ENCODE measurements at regions of chr4 and their contacts with region 1.

Region 1: GRCh38 chr4:77075869-77076799 is at the start of gene CCNI:
- DNase-seq: peak; percentile 90 to 96 (median 95)
- ATAC-seq: peak; percentile 88
- H3K4me3 ChIP-seq: peak within 1 kb of the TSS; percentile 86
- H3K4me3 Mint-ChIP-seq: peak within 1 kb of the TSS in 4 of 10 donors; percentile 98 to 99 (median 99)
- H3K27ac ChIP-seq: peak within 1 kb of the TSS; percentile 98
- H3K27ac Mint-ChIP-seq: peak within 1 kb of the TSS in 5 of 9 donors; percentile 100
- H3K4me1 ChIP-seq: peaks cover 14 to 28% of the 10 kb centered on the region in 2 donors
- H3K4me1 Mint-ChIP-seq: peaks cover 28 to 54% (median 43%) of the 10 kb centered on the region in 7 donors
- H3K27me3 ChIP-seq: no peaks in the 10 kb centered on the region
- H3K27me3 Mint-ChIP-seq: peaks cover 0 to 7% (median 0%) of the 10 kb centered on the region in 5 donors
- total RNA-seq, gene CCNI: 206 to 393 (median 314) TPM

Region 2: DNA sequence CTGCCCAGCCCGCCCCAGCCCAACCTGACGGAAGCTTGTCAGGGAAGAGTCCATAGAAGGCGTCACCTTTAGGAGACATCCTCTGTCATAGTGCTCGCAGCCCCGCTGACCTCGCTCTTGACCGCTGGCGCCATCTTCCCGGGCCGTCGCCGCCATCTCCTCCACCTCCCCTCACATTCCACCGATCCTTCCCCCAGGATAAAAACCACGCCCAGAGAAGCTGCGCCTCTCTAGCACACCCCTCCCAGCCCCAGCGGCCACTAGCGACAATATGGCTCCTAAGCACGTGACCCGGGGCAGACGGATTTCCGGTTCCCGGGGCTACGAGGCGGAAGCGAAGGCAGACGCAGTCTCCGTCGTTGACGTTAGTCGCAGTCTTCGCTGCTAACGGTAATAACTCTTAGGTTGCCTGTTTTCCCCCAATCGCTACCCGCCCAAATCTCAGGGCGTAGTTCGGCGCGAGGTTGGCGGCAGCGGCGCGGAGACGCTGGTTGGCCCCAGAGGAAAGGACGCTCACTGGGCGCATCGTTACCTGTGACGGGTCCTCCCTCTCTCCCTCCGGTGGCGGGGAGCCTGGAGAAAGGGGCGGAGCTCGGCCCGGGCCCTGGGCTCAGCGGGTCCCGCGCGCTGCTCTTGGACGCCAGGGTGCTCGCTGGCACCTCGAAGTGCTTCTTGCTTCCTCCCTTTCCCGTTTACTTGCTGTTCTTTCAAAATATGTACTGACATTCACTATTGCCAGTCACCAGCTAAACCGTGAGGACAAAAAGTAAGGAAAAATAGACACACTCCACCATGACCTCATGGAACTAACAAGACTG is 1561.8 kb before region 1 on chr4 and contains the starts of genes RCHY1 and THAP6:
- CTCF ChIA-PET with region 1: no interaction called
- POLR2A ChIA-PET with region 1: no interaction called
- intact Hi-C with region 1: loop called (anchors 5 kb)
- DNase-seq: peak; percentile 82 to 95 (median 93)
- ATAC-seq: peak; percentile 92
- H3K4me3 ChIP-seq: peak within 1 kb of the TSS; percentile 79
- H3K4me3 Mint-ChIP-seq: peak within 1 kb of the TSS in 1 of 10 donors; percentile 97
- H3K27ac ChIP-seq: peak within 1 kb of the TSS; percentile 98
- H3K27ac Mint-ChIP-seq: peak within 1 kb of the TSS in 7 of 9 donors; percentile 96 to 100 (median 98)
- H3K4me1 ChIP-seq: peaks cover 53 to 56% of the 10 kb centered on the region in 2 donors
- H3K4me1 Mint-ChIP-seq: peaks cover 30 to 63% (median 49%) of the 10 kb centered on the region in 7 donors
- H3K27me3 ChIP-seq: no peaks in the 10 kb centered on the region
- H3K27me3 Mint-ChIP-seq: no peaks in the 10 kb centered on the region
- total RNA-seq, gene RCHY1: 23.0 to 37.8 (median 29.6) TPM
- total RNA-seq, gene THAP6: 18.2 to 43.9 (median 25.1) TPM

Region 3: DNA sequence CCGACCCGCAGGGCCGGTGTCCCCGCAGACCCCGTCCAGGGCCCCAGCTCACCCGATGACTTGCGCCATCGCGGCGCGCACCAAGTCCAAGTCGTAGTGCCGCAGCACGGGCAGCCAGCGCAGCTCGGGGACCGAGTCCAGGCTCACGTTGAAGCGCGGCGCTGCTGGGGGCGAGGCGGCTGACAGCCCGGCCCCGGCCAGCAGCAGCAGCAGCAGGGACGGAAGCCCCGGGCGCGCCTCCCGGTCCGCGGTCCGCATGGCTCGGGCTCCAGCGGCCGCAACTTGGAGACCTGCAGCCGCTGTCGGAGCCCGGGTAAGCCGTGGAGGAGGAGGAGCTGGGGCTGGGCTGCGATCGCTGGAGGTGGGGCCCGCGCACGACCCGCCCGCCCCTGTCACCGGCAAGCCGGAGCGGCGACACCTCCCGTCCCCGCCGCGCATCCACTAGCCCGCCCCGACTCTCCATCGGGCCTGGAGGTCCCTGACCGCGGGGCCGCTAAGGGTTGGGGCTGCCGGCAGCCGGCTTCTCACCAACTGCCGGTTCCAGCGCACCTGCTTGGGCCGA is 1135.4 kb before region 1 on chr4 and contains the start of gene NAAA:
- CTCF ChIA-PET with region 1: no interaction called
- POLR2A ChIA-PET with region 1: interaction called, 3 read pairs
- intact Hi-C with region 1: loop called in 1 of 2 experiments (anchors 1 kb)
- DNase-seq: peak; percentile 57 to 87 (median 75)
- ATAC-seq: peak; percentile 92
- H3K4me3 ChIP-seq: peak within 1 kb of the TSS; percentile 100
- H3K4me3 Mint-ChIP-seq: peak within 1 kb of the TSS; percentile 96 to 99 (median 98)
- H3K27ac ChIP-seq: peak within 1 kb of the TSS; percentile 80
- H3K27ac Mint-ChIP-seq: peak within 1 kb of the TSS; percentile 90 to 98 (median 94)
- H3K4me1 ChIP-seq: peaks cover 9 to 12% of the 10 kb centered on the region in 2 donors
- H3K4me1 Mint-ChIP-seq: peaks cover 12 to 34% (median 22%) of the 10 kb centered on the region in 7 donors
- H3K27me3 ChIP-seq: no peaks in the 10 kb centered on the region
- H3K27me3 Mint-ChIP-seq: no peaks in the 10 kb centered on the region
- total RNA-seq, gene NAAA: 36.9 to 103 (median 80.3) TPM

Region 4: DNA sequence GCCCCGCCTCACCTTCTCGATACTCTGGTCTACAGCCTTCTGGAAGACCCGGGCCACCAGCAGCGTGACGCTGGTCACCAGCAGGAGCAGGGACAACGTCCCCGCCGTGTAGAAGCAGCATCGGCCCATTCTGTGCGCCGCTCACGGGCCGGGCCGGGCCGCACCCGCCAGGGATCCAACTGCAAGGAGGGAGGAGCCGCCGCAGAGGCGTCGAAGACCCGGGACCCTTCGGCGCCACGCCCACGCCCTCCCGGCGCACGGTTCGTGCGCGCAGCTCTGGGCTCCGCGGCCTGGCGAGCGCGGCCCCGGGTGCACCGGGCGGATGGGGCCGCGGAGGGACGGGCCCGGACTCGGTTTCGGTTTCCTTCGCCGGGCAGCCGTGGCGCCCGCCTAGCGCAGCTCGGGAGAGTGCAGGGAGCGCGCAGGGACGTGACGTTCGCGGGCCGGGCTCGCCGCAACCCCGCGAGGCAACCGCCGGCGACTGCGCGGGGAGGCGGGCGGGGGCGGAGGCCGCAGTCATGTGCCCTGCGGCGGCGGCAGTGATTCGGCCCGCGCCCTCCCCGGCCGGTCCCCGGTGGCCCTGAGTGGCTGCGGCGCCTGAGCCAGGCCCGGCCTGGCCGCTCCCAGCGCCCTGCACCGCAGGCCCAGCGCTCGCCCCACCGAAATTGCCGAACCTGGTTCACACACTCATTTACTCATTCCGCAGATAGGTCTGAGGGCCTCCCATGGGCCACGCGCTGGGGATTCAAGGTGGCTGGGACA is 862.5 kb before region 1 on chr4 and contains the start of gene SCARB2:
- CTCF ChIA-PET with region 1: no interaction called
- POLR2A ChIA-PET with region 1: no interaction called
- intact Hi-C with region 1: loop called in 1 of 2 experiments (anchors 5 kb)
- DNase-seq: peak; percentile 72 to 78 (median 74)
- ATAC-seq: peak; percentile 82
- H3K4me3 ChIP-seq: peak within 1 kb of the TSS; percentile 76
- H3K4me3 Mint-ChIP-seq: peak within 1 kb of the TSS; percentile 87 to 96 (median 94)
- H3K27ac ChIP-seq: peak within 1 kb of the TSS; percentile 85
- H3K27ac Mint-ChIP-seq: peak within 1 kb of the TSS; percentile 89 to 97 (median 95)
- H3K4me1 ChIP-seq: peaks cover 21 to 39% of the 10 kb centered on the region in 2 donors
- H3K4me1 Mint-ChIP-seq: peaks cover 36 to 71% (median 66%) of the 10 kb centered on the region in 7 donors
- H3K27me3 ChIP-seq: no peaks in the 10 kb centered on the region
- H3K27me3 Mint-ChIP-seq: peaks cover 0 to 28% (median 0%) of the 10 kb centered on the region in 5 donors
- total RNA-seq, gene SCARB2: 13.5 to 35.7 (median 29.1) TPM

Region 5: DNA sequence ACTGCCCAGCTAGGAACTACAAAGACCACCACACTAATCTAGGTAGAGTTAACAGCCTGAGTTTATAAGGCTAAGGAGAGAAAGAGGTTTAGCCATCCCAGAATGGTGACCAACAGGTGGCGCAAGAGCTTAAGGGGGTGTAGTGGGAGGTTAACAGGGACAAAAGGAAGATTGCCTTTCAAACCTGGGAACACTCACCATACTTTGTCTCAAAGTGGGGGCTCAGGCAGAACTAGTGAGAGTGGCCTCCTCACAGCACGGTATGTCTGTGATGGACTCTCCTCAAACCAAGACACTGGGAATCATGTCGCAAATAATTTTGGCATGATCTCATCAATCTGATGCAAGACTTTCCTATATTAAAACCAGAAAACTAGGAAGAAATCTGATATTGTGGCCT is 23.8 kb before region 1 on chr4:
- CTCF ChIA-PET with region 1: interaction called, 6 read pairs
- POLR2A ChIA-PET with region 1: interaction called, 4 read pairs
- intact Hi-C with region 1: loop called (anchors 1 to 2 kb)
- DNase-seq: peak in 7 of 9 donors; percentile 18 to 59 (median 42)
- ATAC-seq: peak; percentile 74
- H3K4me3 ChIP-seq: no peak overlapping the region
- H3K4me3 Mint-ChIP-seq: no peak overlapping the region
- H3K27ac ChIP-seq: no peak overlapping the region
- H3K27ac Mint-ChIP-seq: peak overlapping the region in 6 of 9 donors; percentile 14 to 83 (median 70)
- H3K4me1 ChIP-seq: no peaks in the 10 kb centered on the region
- H3K4me1 Mint-ChIP-seq: peaks cover 0 to 19% (median 9%) of the 10 kb centered on the region in 7 donors
- H3K27me3 ChIP-seq: no peaks in the 10 kb centered on the region
- H3K27me3 Mint-ChIP-seq: no peaks in the 10 kb centered on the region

Region 6: DNA sequence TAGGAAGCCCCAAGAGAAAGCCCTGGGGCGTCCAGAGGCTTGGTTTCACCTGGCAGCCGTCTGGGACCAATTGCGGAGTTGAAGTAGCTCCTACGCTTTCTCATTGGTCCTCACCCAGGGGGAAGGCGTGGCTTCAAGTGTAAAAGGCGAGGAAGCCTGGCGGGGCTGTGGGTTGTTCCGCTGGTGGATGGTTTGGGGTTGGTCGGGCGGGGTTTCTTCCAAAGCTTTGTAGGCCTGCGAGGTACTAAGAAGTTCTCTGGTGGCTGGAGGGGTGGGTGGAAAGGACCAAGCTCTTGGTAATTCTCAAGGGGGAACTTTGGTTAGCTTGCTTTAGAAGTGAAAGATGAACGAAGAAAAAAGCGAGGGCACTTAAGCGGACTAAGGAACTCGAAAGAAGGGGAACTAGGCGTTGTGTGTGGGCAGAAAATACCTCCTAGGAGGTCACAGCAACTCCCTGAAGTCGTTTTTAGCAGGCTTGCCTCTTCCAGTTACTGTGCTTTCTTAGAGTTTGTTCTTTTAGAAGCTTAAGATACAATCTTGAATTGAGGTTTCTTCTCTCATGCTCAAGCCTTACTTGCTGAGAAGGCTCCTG is 117.5 kb after region 1 on chr4:
- CTCF ChIA-PET with region 1: interaction called, 6 read pairs
- POLR2A ChIA-PET with region 1: interaction called, 3 read pairs
- intact Hi-C with region 1: loop called in 1 of 2 experiments (anchors 1 kb)
- DNase-seq: peak; percentile 47 to 79 (median 72)
- ATAC-seq: peak; percentile 95
- H3K4me3 ChIP-seq: peak overlapping the region; percentile 25
- H3K4me3 Mint-ChIP-seq: peak overlapping the region; percentile 78 to 93 (median 90)
- H3K27ac ChIP-seq: peak overlapping the region; percentile 52
- H3K27ac Mint-ChIP-seq: peak overlapping the region; percentile 88 to 97 (median 92)
- H3K4me1 ChIP-seq: peaks cover 0 to 6% of the 10 kb centered on the region in 2 donors
- H3K4me1 Mint-ChIP-seq: peaks cover 5 to 22% (median 18%) of the 10 kb centered on the region in 7 donors
- H3K27me3 ChIP-seq: peaks cover 0 to 5% of the 10 kb centered on the region in 2 donors
- H3K27me3 Mint-ChIP-seq: peaks cover 0 to 10% (median 0%) of the 10 kb centered on the region in 5 donors

Region 7: GRCh38 chr4:77862478-77863216 is 786.5 kb after region 1 on chr4 and contains the start of gene MRPL1:
- CTCF ChIA-PET with region 1: no interaction called
- POLR2A ChIA-PET with region 1: no interaction called
- intact Hi-C with region 1: loop called (anchors 1 kb)
- DNase-seq: peak; percentile 68 to 95 (median 92)
- ATAC-seq: peak; percentile 87
- H3K4me3 ChIP-seq: peak within 1 kb of the TSS; percentile 76
- H3K4me3 Mint-ChIP-seq: peak within 1 kb of the TSS; percentile 92 to 99 (median 96)
- H3K27ac ChIP-seq: peak within 1 kb of the TSS; percentile 99
- H3K27ac Mint-ChIP-seq: peak within 1 kb of the TSS; percentile 97 to 100 (median 99)
- H3K4me1 ChIP-seq: peaks cover 24 to 31% of the 10 kb centered on the region in 2 donors
- H3K4me1 Mint-ChIP-seq: peaks cover 33 to 88% (median 71%) of the 10 kb centered on the region in 7 donors
- H3K27me3 ChIP-seq: no peaks in the 10 kb centered on the region
- H3K27me3 Mint-ChIP-seq: peaks cover 0 to 4% (median 0%) of the 10 kb centered on the region in 5 donors
- total RNA-seq, gene MRPL1: 13.0 to 37.9 (median 17.8) TPM

Measured in naive thymus-derived CD4-positive, alpha-beta T cell (primary cell).